ENCODE measurements at regions of chr11 and their contacts with region 1.

Region 1: DNA sequence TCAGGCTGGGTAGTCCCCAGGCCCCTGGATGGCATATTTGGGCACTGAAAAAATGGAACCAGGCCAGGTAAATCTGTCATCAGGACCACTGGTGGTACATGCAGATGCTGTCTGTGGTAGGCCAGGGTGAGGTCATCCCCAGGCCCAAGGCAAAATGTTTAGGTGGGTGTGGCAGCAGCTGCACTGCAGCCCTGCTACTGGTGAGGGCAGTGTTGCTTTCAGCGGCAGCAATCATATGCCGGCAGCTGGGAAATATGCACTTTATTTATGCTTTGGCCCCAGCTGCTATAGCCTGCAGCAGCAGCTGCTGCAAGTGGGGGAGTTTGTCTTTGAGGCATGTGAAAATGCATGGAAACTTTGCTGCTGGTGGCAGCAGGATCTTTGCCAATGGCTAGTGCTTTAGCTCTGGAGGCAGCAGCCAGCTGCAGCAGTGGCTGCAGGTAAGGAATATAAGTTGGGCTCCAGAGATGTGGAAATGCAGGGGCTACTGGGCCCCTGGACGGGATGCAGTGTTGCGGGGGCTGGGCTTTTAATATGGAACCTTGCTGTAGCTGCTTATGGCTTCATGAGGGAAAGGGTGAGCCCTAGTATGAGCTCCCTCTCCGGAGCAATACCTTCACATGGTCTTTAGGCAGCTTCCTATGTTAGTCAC is 365.7 kb upstream of the CADM1 start:
- DNase-seq: peak; percentile 40 to 65 (median 52)
- H3K4me3 ChIP-seq: no peak overlapping the region
- H3K4me3 Mint-ChIP-seq: no peak overlapping the region
- H3K27ac ChIP-seq: no peak overlapping the region
- H3K27ac Mint-ChIP-seq: peak overlapping the region in 1 of 7 donors; percentile 18
- H3K4me1 ChIP-seq: peaks cover 46% of the 10 kb centered on the region in 2 donors
- H3K4me1 Mint-ChIP-seq: peaks cover 41% of the 10 kb centered on the region
- H3K27me3 ChIP-seq: peaks cover 0 to 2% of the 10 kb centered on the region in 2 donors
- H3K27me3 Mint-ChIP-seq: peaks cover 13 to 26% (median 24%) of the 10 kb centered on the region in 3 donors
- CTCF ChIP-seq: peak; percentile 79

Region 2: GRCh38 chr11:115803073-115803740 is 66.7 kb before region 1 on chr11:
- intact Hi-C with region 1: no loop called
- DNase-seq: no peak
- H3K4me3 ChIP-seq: no peak overlapping the region
- H3K4me3 Mint-ChIP-seq: no peak overlapping the region
- H3K27ac ChIP-seq: no peak overlapping the region
- H3K27ac Mint-ChIP-seq: no peak overlapping the region
- H3K4me1 ChIP-seq: no peaks in the 10 kb centered on the region
- H3K4me1 Mint-ChIP-seq: no peaks in the 10 kb centered on the region
- H3K27me3 ChIP-seq: no peaks in the 10 kb centered on the region
- H3K27me3 Mint-ChIP-seq: peaks cover 0 to 3% (median 0%) of the 10 kb centered on the region in 3 donors
- CTCF ChIP-seq: no peak

Region 3: GRCh38 chr11:115905341-115906000 is 35.6 kb after region 1 on chr11:
- intact Hi-C with region 1: no loop called
- DNase-seq: no peak
- H3K4me3 ChIP-seq: no peak overlapping the region
- H3K4me3 Mint-ChIP-seq: no peak overlapping the region
- H3K27ac ChIP-seq: no peak overlapping the region
- H3K27ac Mint-ChIP-seq: no peak overlapping the region
- H3K4me1 ChIP-seq: peaks cover 0 to 5% of the 10 kb centered on the region in 2 donors
- H3K4me1 Mint-ChIP-seq: no peaks in the 10 kb centered on the region
- H3K27me3 ChIP-seq: no peaks in the 10 kb centered on the region
- H3K27me3 Mint-ChIP-seq: peaks cover 1 to 4% (median 3%) of the 10 kb centered on the region in 3 donors
- CTCF ChIP-seq: no peak

Region 4: DNA sequence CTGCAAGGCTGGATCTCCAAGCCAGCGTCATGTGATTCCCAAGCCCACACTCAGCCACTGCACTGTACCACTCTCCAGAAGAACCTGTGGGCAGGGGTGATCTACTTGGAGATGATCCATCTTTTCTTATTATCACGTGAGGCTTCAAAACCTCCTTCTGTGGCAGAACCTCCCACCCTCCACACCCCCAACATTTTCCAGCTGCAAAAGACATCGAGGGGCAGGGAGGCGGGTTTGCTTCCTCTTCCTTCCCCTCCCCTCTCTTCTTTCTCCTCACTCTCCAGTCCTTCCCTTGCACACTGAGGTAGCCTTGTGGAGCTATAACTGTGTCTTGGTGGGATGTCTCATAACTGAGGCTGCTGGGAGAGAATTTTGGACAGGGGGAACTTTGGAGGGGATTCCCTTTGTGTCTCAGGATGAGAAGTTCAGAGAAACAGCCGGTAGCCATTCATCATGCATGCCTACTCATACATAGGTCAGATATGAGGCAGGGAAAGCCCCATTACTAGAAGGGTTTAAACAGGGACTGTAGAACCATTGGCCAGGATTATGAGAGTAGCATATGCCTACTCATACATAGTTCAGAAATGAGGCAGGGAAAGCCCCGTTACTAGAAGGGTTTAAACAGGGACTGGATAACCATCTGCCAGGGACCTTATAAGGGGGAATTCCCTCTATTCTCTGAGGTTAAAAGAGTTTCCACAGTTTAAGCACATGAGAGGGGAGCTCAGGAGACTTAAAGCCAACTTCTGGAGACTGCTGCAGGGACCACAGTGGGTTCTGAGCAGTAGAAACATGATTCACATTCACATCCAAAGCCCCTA is 55.0 kb after region 1 on chr11:
- intact Hi-C with region 1: loop called in 1 of 2 experiments (anchors 5 kb)
- DNase-seq: peak in 2 of 3 donors; percentile 42 to 91
- H3K4me3 ChIP-seq: no peak overlapping the region
- H3K4me3 Mint-ChIP-seq: no peak overlapping the region
- H3K27ac ChIP-seq: no peak overlapping the region
- H3K27ac Mint-ChIP-seq: peak overlapping the region in 2 of 7 donors; percentile 6 to 26
- H3K4me1 ChIP-seq: peaks cover 20 to 23% of the 10 kb centered on the region in 2 donors
- H3K4me1 Mint-ChIP-seq: peaks cover 15% of the 10 kb centered on the region
- H3K27me3 ChIP-seq: peaks cover 0 to 6% of the 10 kb centered on the region in 2 donors
- H3K27me3 Mint-ChIP-seq: peaks cover 32 to 34% (median 34%) of the 10 kb centered on the region in 3 donors
- CTCF ChIP-seq: no peak

Measured in CD14-positive monocyte (primary cell).